Activated CD4-positive, alpha-beta T cell treated with anti-CD3 and anti-CD28 coated beads, Interleukin-2, amount 10 ng/mL, durations not matched to agents 24 days and 14 days (primary cell): ENCODE measurements at regions of chr14 and their contacts with region 1.

Region 1: DNA sequence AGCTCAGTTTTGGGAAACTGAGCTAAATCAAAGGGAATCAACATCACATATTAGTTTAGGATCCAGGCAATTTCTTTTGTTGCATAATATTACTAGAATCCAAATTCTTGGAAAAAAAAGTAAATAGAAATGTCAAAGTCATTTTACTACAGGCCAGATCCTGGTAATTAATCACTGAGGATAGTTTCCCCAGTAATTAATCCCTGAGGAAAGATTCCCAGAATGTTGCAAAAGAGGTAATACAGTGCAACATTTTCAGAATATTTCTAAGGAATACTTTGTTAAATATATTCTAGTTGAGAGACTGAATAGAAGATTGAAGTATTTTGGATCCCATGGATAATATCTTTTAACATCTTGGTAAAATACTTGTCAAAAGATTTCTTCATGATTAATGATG is 207.0 kb upstream of the GARIN2 start:
- DNase-seq: no peak
- H3K4me3 Mint-ChIP-seq: no peak overlapping the region
- H3K27ac Mint-ChIP-seq: no peak overlapping the region
- H3K4me1 Mint-ChIP-seq: no peaks in the 10 kb centered on the region
- H3K27me3 Mint-ChIP-seq: no peaks in the 10 kb centered on the region

Region 2: GRCh38 chr14:66596241-66596985 is 385.8 kb before region 1 on chr14:
- intact Hi-C with region 1: no loop called
- DNase-seq: no peak
- H3K4me3 Mint-ChIP-seq: no peak overlapping the region
- H3K27ac Mint-ChIP-seq: no peak overlapping the region
- H3K4me1 Mint-ChIP-seq: peaks cover 1% of the 10 kb centered on the region
- H3K27me3 Mint-ChIP-seq: no peaks in the 10 kb centered on the region

Region 3: GRCh38 chr14:66610154-66610563 is 372.1 kb before region 1 on chr14:
- intact Hi-C with region 1: loop called (anchors 10 kb)
- DNase-seq: peak; percentile 71
- H3K4me3 Mint-ChIP-seq: peak overlapping the region; percentile 27
- H3K27ac Mint-ChIP-seq: peak overlapping the region; percentile 43
- H3K4me1 Mint-ChIP-seq: peaks cover 18% of the 10 kb centered on the region
- H3K27me3 Mint-ChIP-seq: no peaks in the 10 kb centered on the region

Region 4: GRCh38 chr14:66735853-66736252 is 246.4 kb before region 1 on chr14:
- intact Hi-C with region 1: no loop called
- DNase-seq: no peak
- H3K4me3 Mint-ChIP-seq: no peak overlapping the region
- H3K27ac Mint-ChIP-seq: no peak overlapping the region
- H3K4me1 Mint-ChIP-seq: no peaks in the 10 kb centered on the region
- H3K27me3 Mint-ChIP-seq: no peaks in the 10 kb centered on the region

Region 5: DNA sequence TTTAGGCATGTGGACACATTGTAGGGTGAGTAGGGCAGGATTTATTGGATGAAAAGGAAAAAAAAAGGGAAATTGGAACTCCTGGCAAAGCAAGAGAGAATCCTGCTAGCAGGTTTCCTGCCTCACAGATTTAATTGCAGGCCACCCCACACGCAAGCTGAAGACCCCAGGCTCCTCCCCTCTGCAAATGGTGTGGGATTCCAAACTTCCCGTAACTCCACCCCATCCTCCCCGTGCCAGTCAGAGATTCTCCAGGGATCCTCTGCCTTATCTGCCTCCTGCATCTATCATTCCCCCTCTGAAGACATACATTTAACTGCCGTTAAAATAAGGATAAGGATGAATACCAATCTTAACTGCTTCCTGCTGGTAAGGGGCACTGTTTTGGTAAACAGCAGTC is 42.8 kb before region 1 on chr14:
- intact Hi-C with region 1: no loop called
- DNase-seq: no peak
- H3K4me3 Mint-ChIP-seq: no peak overlapping the region
- H3K27ac Mint-ChIP-seq: no peak overlapping the region
- H3K4me1 Mint-ChIP-seq: no peaks in the 10 kb centered on the region
- H3K27me3 Mint-ChIP-seq: no peaks in the 10 kb centered on the region